Heart left ventricle (tissue), 16 donors: ENCODE measurements at regions of chrX and their contacts with region 1.

Region 1: DNA sequence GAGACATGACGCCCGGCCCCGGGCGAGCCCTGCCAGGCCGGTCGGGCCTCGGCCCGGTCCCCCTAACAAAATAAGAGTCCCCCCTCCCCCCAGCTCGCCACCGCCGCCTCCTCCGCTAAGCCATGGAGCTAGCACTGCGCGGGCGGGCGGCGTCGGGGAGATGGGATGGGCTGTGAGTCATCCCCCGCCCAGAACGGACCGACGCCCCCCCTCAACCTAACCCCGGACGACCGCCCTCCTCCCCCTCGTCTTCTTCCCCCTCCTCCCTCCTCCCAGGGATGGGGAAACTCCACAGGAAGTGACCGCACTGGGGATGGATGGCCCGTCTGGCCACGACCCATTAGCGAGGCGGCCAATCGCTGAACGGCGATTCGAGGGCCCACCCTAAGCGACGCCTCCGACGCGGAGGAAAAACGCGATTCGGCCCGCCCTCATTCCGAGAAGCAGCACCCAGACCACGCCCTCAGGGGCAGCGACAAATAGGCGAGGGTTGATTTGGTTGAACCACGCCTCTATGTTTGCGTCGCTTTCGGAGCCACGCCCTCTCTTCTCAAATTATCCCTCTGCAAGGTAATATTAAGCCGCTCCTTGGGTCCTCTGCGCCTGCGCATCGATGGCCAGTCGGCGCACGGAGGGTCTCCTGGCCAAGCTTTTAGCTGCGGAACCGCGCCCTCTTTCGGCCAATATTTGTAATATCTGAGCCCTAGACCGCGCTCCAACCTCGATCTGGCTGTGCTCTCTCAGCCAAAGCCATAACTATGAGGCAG is at the start of gene TFE3:
- DNase-seq: peak; percentile 96 to 99 (median 97)
- ATAC-seq: peak; percentile 90 to 96 (median 96)
- H3K4me3 ChIP-seq: peak within 1 kb of the TSS; percentile 62 to 99 (median 85)
- H3K27ac ChIP-seq: peak within 1 kb of the TSS; percentile 89 to 99 (median 96)
- H3K4me1 ChIP-seq: peaks cover 0 to 31% (median 13%) of the 10 kb centered on the region in 12 donors
- H3K27me3 ChIP-seq: no peaks in the 10 kb centered on the region
- CTCF ChIP-seq: peak; percentile 47 to 72 (median 62)
- POLR2A ChIP-seq: peak; percentile 19 to 69
- total RNA-seq, gene TFE3: 14.9 to 61.2 (median 23.6) TPM

Region 2: DNA sequence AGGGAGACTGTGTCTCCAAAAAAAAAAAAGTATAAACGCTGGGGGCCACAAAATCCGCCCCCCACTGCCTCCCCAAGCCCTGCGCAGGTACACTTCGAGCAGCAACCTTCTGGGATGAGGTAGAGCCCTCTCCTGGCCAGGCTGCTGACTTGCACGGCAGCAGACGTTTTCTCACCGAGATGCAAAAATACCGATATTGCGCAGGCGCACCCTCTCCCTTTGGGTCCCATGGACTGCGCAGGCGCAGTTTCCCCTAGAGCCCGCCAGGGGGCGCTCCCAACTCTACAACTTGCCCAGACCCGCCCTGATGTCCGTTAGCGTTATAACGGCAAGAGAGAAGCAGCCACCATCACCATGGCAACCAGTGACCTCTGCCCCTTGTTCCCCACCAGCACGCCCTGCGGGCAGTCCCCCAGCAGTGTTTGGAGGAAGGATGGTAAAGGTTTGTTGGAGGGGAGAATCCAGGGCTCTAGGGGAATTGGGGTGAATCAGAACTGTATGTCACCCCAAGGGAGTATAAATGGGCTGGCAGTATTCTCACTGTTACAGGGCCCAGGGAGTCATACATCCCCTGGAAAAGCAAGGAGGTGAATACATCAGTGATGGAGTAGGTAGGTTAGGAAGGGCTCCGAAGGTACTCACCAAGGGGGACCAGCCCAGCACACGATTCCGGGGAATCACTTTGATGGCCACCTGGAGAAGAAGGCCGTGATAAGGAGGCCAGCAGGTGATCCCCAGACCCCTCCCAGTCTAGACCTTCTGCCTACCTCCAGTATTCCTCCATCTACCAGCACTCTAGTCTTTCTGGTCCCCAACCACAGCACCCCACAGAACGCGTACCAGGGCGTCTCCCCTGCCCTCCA is 126.0 kb before region 1 on chrX:
- intact Hi-C with region 1: loop called in 2 of 10 experiments (anchors 5 to 10 kb)
- DNase-seq: peak; percentile 85 to 92 (median 86)
- ATAC-seq: peak; percentile 55 to 79 (median 76)
- H3K4me3 ChIP-seq: peak overlapping the region in 7 of 12 donors; percentile 15 to 74 (median 33)
- H3K27ac ChIP-seq: peak overlapping the region in 2 of 12 donors; percentile 52 to 85
- H3K4me1 ChIP-seq: peaks cover 0 to 18% (median 2%) of the 10 kb centered on the region in 12 donors
- H3K27me3 ChIP-seq: no peaks in the 10 kb centered on the region
- CTCF ChIP-seq: peak; percentile 81 to 96 (median 93)
- POLR2A ChIP-seq: no peak

Region 3: DNA sequence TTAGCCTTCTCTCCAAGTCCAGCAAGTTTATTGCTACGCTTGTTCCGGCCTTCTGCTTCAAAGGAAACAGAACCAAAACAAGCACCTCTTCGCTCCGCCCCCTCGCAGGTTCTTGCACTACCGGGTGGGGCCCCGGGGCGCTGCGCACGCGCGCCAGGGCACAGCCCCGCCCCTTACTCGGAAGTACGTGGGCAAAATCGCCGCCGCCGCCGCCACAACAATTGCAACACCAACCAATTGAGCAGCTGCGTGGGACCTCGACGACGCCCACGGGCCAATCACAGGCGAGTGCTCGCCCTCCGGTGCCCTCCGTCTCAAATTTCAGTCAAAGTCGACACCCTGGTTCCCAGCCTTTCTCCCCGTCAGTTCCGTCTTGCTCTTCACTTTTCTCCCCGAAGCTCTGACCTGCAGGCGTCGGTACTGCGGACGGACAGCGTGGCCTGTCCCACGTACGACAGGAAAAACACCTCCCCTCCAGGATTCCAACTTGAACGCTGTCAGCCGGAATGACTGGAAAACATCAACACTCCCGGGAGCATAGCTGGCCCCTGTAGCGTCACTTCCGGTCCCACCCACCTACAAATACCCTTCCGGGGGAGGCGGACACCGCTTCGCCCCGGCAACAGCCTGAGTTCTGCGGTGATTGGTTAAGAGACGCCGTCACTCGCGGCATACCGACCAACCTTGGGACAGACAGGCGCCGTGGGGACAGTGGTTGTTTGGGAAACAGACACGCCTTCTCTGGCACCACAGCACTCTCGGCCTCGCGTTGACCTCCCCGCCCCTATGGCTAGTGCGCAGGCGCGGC is 85.4 kb before region 1 on chrX:
- intact Hi-C with region 1: loop called in 4 of 10 experiments (anchors 5 to 10 kb)
- DNase-seq: peak; percentile 96 to 98 (median 97)
- ATAC-seq: peak; percentile 93 to 97 (median 96)
- H3K4me3 ChIP-seq: peak overlapping the region; percentile 49 to 87 (median 71)
- H3K27ac ChIP-seq: peak overlapping the region; percentile 87 to 99 (median 94)
- H3K4me1 ChIP-seq: peaks cover 0 to 42% (median 21%) of the 10 kb centered on the region in 12 donors
- H3K27me3 ChIP-seq: no peaks in the 10 kb centered on the region
- CTCF ChIP-seq: no peak
- POLR2A ChIP-seq: no peak

Region 4: GRCh38 chrX:48972220-48973167 is 70.9 kb before region 1 on chrX:
- intact Hi-C with region 1: loop called in 1 of 10 experiments (anchors 10 kb)
- DNase-seq: peak in 1 of 5 donors; percentile 24
- ATAC-seq: peak; percentile 17 to 54 (median 46)
- H3K4me3 ChIP-seq: peak overlapping the region in 10 of 12 donors; percentile 25 to 50 (median 37)
- H3K27ac ChIP-seq: peak overlapping the region in 6 of 12 donors; percentile 28 to 63 (median 50)
- H3K4me1 ChIP-seq: peaks cover 0 to 9% (median 0%) of the 10 kb centered on the region in 12 donors
- H3K27me3 ChIP-seq: peaks cover 0 to 7% (median 0%) of the 10 kb centered on the region in 9 donors
- CTCF ChIP-seq: peak in 11 of 12 donors; percentile 26 to 61 (median 42)
- POLR2A ChIP-seq: no peak

Region 5: GRCh38 chrX:49002091-49002935 is 41.1 kb before region 1 on chrX and contains the start of gene GRIPAP1:
- intact Hi-C with region 1: loop called in 4 of 10 experiments (anchors 1 to 5 kb)
- DNase-seq: peak; percentile 54 to 83 (median 76)
- ATAC-seq: peak; percentile 92 to 96 (median 92)
- H3K4me3 ChIP-seq: peak within 1 kb of the TSS; percentile 40 to 85 (median 72)
- H3K27ac ChIP-seq: peak within 1 kb of the TSS; percentile 62 to 95 (median 86)
- H3K4me1 ChIP-seq: peaks cover 0 to 6% (median 0%) of the 10 kb centered on the region in 12 donors
- H3K27me3 ChIP-seq: no peaks in the 10 kb centered on the region
- CTCF ChIP-seq: no peak
- POLR2A ChIP-seq: no peak
- total RNA-seq, gene GRIPAP1: 11.4 to 41.6 (median 18.9) TPM

Region 6: GRCh38 chrX:49100704-49101628 is 57.6 kb after region 1 on chrX:
- intact Hi-C with region 1: loop called in 1 of 10 experiments (anchors 1 kb)
- DNase-seq: peak; percentile 90 to 93 (median 93)
- ATAC-seq: peak; percentile 98 to 100 (median 99)
- H3K4me3 ChIP-seq: peak overlapping the region; percentile 34 to 84 (median 63)
- H3K27ac ChIP-seq: peak overlapping the region in 11 of 12 donors; percentile 66 to 84 (median 74)
- H3K4me1 ChIP-seq: peaks cover 0 to 15% (median 0%) of the 10 kb centered on the region in 12 donors
- H3K27me3 ChIP-seq: no peaks in the 10 kb centered on the region
- CTCF ChIP-seq: no peak
- POLR2A ChIP-seq: peak in 1 of 2 donors; percentile 62

Region 7: GRCh38 chrX:49165901-49166881 is 122.8 kb after region 1 on chrX:
- intact Hi-C with region 1: loop called in 1 of 10 experiments (anchors 5 kb)
- DNase-seq: peak; percentile 83 to 89 (median 87)
- ATAC-seq: peak; percentile 44 to 64 (median 52)
- H3K4me3 ChIP-seq: peak overlapping the region in 11 of 12 donors; percentile 24 to 59 (median 47)
- H3K27ac ChIP-seq: peak overlapping the region; percentile 90 to 99 (median 93)
- H3K4me1 ChIP-seq: peaks cover 0 to 23% (median 4%) of the 10 kb centered on the region in 12 donors
- H3K27me3 ChIP-seq: no peaks in the 10 kb centered on the region
- CTCF ChIP-seq: peak in 9 of 12 donors; percentile 7 to 52 (median 37)
- POLR2A ChIP-seq: peak in 1 of 2 donors; percentile 34